ENCODE measurements at regions of chr2 and their contacts with region 1.

Region 1: GRCh38 chr2:8681786-8682692 is at the start of gene ID2:
- DNase-seq: peak; percentile 100
- H3K4me3 ChIP-seq: peak within 1 kb of the TSS; percentile 72 to 86 (median 78)
- H3K27ac ChIP-seq: peak within 1 kb of the TSS; percentile 98 to 99 (median 98)
- H3K4me1 ChIP-seq: peaks cover 23 to 60% (median 55%) of the 10 kb centered on the region in 4 donors
- H3K27me3 ChIP-seq: no peaks in the 10 kb centered on the region
- CTCF ChIP-seq: no peak
- EP300 ChIP-seq: no peak
- POLR2A ChIP-seq: peak; percentile 99
- total RNA-seq, gene ID2: 149 to 254 (median 187) TPM

Region 2: DNA sequence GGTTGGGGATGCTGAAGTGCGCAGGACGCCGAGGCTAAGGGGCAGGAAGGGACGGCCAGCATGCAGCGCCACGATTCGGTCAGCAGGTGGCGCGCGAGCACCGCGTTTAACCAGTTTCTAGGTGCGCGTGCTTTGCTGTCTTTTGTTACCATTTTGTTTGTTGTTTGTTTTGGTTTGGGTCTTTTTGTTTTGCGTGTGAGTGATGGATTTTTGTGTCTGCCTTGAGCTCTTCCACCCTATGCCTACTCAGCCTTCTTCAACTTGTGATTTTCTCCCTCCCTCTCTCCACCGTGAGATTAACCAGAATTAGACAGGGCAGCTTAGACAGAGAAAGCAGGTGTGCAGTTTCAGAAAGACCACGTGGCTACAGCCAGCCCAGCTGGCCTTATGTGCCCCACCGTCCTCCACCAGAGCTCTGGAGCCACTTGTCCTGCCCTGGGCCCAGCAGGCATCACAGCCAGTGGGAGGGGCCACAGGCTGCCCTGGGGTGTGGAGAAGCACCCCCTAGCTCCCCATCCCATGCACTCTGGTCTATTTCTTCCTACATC is 1584.6 kb before region 1 on chr2:
- intact Hi-C with region 1: loop called (anchors 10 kb)
- DNase-seq: peak; percentile 93
- H3K4me3 ChIP-seq: peak overlapping the region in 3 of 4 donors; percentile 10 to 21 (median 15)
- H3K27ac ChIP-seq: no peak overlapping the region
- H3K4me1 ChIP-seq: peaks cover 4 to 10% (median 8%) of the 10 kb centered on the region in 4 donors
- H3K27me3 ChIP-seq: no peaks in the 10 kb centered on the region
- CTCF ChIP-seq: peak; percentile 91 to 99 (median 94)
- EP300 ChIP-seq: no peak
- POLR2A ChIP-seq: no peak

Region 3: DNA sequence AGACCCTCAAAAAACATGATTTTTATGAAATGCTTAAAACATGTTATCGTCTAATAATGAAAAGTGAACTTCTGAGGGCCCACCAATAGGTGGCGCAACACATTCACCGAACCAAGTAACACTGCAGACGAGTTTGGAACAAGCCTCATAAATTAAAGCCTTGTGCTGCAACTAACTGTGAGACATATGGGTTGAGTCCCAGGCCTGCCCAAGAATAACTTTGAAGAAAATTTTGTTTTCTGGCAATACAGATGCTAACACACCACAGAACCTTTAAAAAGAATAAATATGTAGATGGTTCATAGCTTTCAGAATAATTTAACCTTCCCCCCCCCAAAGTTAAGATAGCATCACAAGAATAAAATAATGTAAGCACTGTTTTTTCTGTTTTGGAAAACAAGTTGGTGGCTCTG is 1479.0 kb before region 1 on chr2:
- intact Hi-C with region 1: loop called (anchors 10 kb)
- DNase-seq: no peak
- H3K4me3 ChIP-seq: no peak overlapping the region
- H3K27ac ChIP-seq: no peak overlapping the region
- H3K4me1 ChIP-seq: no peaks in the 10 kb centered on the region
- H3K27me3 ChIP-seq: no peaks in the 10 kb centered on the region
- CTCF ChIP-seq: peak; percentile 61 to 77 (median 64)
- EP300 ChIP-seq: no peak
- POLR2A ChIP-seq: no peak

Region 4: DNA sequence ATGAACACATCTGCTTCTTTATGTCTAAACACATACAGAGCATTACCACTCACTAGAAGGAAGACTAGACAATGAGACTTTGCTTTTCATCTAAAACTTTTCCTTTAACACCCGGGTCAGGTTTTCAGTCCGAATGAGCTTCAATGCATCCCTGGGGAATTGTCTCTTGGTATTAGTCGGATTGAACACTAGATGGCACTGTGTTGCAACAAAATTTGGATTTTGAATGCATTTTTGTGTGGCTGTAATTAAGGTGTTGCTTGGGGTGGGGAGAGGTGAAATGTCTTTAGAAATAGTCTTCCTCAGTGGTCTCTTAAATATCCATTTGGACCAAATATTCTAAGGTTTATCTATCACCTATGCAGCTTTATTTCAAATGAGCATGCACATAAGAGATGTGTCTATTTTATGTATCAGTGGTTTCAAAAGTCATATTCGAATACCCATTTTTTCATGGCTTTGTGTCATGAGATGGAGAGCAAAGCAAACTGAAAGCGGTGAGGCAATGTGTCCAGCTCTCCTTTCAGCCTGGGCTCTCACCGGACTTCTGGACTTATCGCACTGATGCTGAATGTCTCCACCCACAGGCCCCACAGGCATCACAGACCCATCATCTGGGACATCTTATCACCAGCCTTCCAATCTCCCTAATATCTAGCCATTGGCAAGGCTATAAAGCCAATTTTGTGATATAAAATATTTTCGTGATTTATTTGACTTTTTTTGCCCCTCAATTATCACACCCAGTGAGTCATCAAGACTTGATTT is 1254.6 kb before region 1 on chr2:
- intact Hi-C with region 1: loop called (anchors 2 kb)
- DNase-seq: no peak
- H3K4me3 ChIP-seq: no peak overlapping the region
- H3K27ac ChIP-seq: no peak overlapping the region
- H3K4me1 ChIP-seq: peaks cover 4 to 11% (median 11%) of the 10 kb centered on the region in 4 donors
- H3K27me3 ChIP-seq: peaks cover 0 to 16% (median 0%) of the 10 kb centered on the region in 4 donors
- CTCF ChIP-seq: peak; percentile 59 to 75 (median 60)
- EP300 ChIP-seq: no peak
- POLR2A ChIP-seq: no peak

Region 5: DNA sequence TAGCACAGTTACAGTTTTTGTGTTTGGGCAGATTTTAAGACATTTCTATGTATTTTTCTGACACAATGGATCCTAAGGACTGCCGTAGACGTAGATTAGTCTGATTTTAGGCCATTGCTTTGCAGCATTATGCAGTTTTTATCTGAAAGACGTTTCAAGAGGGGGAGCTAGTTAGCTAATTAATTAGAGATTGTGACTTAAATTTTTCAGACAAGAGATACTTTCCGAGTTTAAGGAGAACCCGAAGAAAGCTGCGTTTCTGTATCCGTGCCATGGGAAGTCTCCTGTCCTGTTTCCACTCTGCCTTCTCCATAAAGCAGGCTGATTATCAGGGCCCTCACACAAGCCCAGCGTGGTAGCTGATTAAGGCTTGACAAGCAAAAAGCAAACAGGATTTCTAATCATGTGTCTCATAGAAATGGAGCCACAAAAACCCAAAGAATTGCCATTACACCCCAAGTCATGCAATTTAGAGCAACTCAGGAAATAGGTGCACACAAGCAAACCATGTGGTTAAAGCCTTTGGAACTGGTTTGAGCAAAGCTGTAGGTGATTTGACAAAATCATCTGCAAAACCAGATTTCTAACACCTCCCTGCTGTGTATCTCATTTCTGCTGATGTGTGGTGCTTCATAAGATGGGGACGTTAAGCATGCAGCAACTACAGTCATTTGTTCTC is 956.7 kb before region 1 on chr2:
- intact Hi-C with region 1: loop called (anchors 5 kb)
- DNase-seq: peak; percentile 50
- H3K4me3 ChIP-seq: no peak overlapping the region
- H3K27ac ChIP-seq: no peak overlapping the region
- H3K4me1 ChIP-seq: peaks cover 0 to 5% (median 3%) of the 10 kb centered on the region in 4 donors
- H3K27me3 ChIP-seq: no peaks in the 10 kb centered on the region
- CTCF ChIP-seq: peak in 1 of 3 experiments; percentile 25
- EP300 ChIP-seq: no peak
- POLR2A ChIP-seq: no peak

Region 6: GRCh38 chr2:7994397-7994951 is 687.6 kb before region 1 on chr2:
- intact Hi-C with region 1: loop called (anchors 10 kb)
- DNase-seq: no peak
- H3K4me3 ChIP-seq: no peak overlapping the region
- H3K27ac ChIP-seq: no peak overlapping the region
- H3K4me1 ChIP-seq: peaks cover 0 to 14% (median 10%) of the 10 kb centered on the region in 4 donors
- H3K27me3 ChIP-seq: no peaks in the 10 kb centered on the region
- CTCF ChIP-seq: no peak
- EP300 ChIP-seq: no peak
- POLR2A ChIP-seq: no peak

Region 7: GRCh38 chr2:8285081-8285480 is 397.0 kb before region 1 on chr2:
- intact Hi-C with region 1: no loop called
- DNase-seq: no peak
- H3K4me3 ChIP-seq: no peak overlapping the region
- H3K27ac ChIP-seq: no peak overlapping the region
- H3K4me1 ChIP-seq: no peaks in the 10 kb centered on the region
- H3K27me3 ChIP-seq: no peaks in the 10 kb centered on the region
- CTCF ChIP-seq: no peak
- EP300 ChIP-seq: no peak
- POLR2A ChIP-seq: no peak

Region 8: GRCh38 chr2:8551622-8552074 is 130.4 kb before region 1 on chr2:
- intact Hi-C with region 1: no loop called
- DNase-seq: no peak
- H3K4me3 ChIP-seq: no peak overlapping the region
- H3K27ac ChIP-seq: no peak overlapping the region
- H3K4me1 ChIP-seq: no peaks in the 10 kb centered on the region
- H3K27me3 ChIP-seq: no peaks in the 10 kb centered on the region
- CTCF ChIP-seq: no peak
- EP300 ChIP-seq: no peak
- POLR2A ChIP-seq: no peak

Region 9: GRCh38 chr2:8583400-8584173 is 98.5 kb before region 1 on chr2:
- intact Hi-C with region 1: loop called (anchors 5 kb)
- DNase-seq: peak; percentile 98
- H3K4me3 ChIP-seq: peak overlapping the region; percentile 26 to 48 (median 37)
- H3K27ac ChIP-seq: peak overlapping the region; percentile 75 to 83 (median 80)
- H3K4me1 ChIP-seq: peaks cover 19 to 41% (median 39%) of the 10 kb centered on the region in 4 donors
- H3K27me3 ChIP-seq: no peaks in the 10 kb centered on the region
- CTCF ChIP-seq: no peak
- EP300 ChIP-seq: no peak
- POLR2A ChIP-seq: no peak

Measured in esophagus muscularis mucosa (tissue), 4 donors.